ENCODE measurements at regions of chr14 and their contacts with region 1.

Region 1: DNA sequence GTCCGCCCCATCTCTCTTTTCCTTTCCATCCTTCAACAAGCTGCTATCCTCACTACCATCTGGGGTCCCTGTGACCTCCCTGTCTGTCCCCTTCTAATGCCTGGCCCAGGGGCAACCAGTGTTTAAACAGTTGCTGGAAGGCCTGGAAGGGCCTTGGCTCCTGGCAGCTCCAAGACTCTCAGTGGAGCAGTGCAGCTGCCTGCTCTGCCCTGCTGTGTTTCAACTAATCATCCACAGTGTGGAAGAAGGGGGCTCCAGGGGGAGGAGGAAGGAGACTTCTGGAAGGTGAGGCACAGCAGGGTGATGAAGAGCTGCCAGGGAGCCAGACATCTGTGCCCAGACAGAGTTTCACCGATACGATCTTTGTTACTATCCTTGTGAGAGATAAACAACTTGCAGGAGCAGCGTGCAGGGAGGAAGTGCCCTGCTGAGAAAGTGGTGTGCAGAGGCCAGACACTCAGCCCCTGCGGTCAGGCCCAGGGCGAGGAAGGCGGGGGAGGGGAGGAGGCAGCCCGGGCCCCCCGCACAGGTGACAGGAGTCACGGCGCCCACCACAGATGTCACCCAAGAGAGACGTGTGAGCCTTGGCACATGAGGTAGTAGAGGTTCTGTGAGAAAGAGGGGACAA is 1061.8 kb downstream of the BCL11B start:
- DNase-seq: peak; percentile 35 to 84 (median 58)
- ATAC-seq: peak; percentile 69 to 75
- H3K4me3 Mint-ChIP-seq: peak overlapping the region; percentile 69 to 85 (median 78)
- H3K27ac Mint-ChIP-seq: peak overlapping the region; percentile 96 to 100 (median 98)
- H3K4me1 Mint-ChIP-seq: peaks cover 57 to 98% (median 90%) of the 10 kb centered on the region in 4 donors
- H3K27me3 Mint-ChIP-seq: no peaks in the 10 kb centered on the region

Region 2: DNA sequence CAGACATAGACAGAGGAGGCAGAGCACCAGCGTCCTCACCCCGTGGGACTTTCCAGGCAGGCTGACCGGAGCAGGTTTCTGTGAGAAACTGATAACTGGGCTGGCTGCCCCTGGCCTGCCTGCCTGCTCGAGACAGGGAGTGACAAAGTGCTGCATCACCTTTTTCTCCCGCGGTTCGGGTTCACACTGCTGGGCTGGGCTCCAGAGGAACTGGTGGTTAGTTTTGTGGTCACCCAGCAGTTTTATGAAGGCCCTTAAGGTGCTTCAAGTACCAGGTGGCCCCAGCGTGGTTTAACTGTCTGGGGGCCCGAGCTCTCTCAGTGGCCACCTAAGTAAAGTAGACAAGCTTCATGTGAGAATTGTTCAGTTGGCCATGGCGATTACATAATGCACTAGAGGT is 11.8 kb before region 1 on chr14:
- POLR2A ChIA-PET with region 1: interaction called, 142 read pairs
- DNase-seq: peak in 3 of 10 donors; percentile 31 to 45 (median 42)
- ATAC-seq: peak; percentile 42 to 62
- H3K4me3 Mint-ChIP-seq: peak overlapping the region; percentile 20 to 87 (median 70)
- H3K27ac Mint-ChIP-seq: peak overlapping the region; percentile 70 to 100 (median 96)
- H3K4me1 Mint-ChIP-seq: peaks cover 57 to 99% (median 89%) of the 10 kb centered on the region in 4 donors
- H3K27me3 Mint-ChIP-seq: no peaks in the 10 kb centered on the region

Region 3: GRCh38 chr14:98227000-98227726 is 17.0 kb after region 1 on chr14:
- POLR2A ChIA-PET with region 1: interaction called, 23 read pairs
- DNase-seq: peak in 1 of 10 donors; percentile 36
- ATAC-seq: peak; percentile 4 to 11
- H3K4me3 Mint-ChIP-seq: peak overlapping the region; percentile 31 to 79 (median 65)
- H3K27ac Mint-ChIP-seq: peak overlapping the region; percentile 84 to 99 (median 94)
- H3K4me1 Mint-ChIP-seq: peaks cover 54 to 87% (median 85%) of the 10 kb centered on the region in 4 donors
- H3K27me3 Mint-ChIP-seq: no peaks in the 10 kb centered on the region

Region 4: GRCh38 chr14:98415766-98416165 is 205.6 kb after region 1 on chr14:
- POLR2A ChIA-PET with region 1: no interaction called
- DNase-seq: no peak
- ATAC-seq: no peak
- H3K4me3 Mint-ChIP-seq: no peak overlapping the region
- H3K27ac Mint-ChIP-seq: no peak overlapping the region
- H3K4me1 Mint-ChIP-seq: peaks cover 14 to 44% (median 28%) of the 10 kb centered on the region in 4 donors
- H3K27me3 Mint-ChIP-seq: no peaks in the 10 kb centered on the region

Measured in naive thymus-derived CD8-positive, alpha-beta T cell (primary cell).